ENCODE measurements at regions of chr14 and their contacts with region 1.

Region 1: DNA sequence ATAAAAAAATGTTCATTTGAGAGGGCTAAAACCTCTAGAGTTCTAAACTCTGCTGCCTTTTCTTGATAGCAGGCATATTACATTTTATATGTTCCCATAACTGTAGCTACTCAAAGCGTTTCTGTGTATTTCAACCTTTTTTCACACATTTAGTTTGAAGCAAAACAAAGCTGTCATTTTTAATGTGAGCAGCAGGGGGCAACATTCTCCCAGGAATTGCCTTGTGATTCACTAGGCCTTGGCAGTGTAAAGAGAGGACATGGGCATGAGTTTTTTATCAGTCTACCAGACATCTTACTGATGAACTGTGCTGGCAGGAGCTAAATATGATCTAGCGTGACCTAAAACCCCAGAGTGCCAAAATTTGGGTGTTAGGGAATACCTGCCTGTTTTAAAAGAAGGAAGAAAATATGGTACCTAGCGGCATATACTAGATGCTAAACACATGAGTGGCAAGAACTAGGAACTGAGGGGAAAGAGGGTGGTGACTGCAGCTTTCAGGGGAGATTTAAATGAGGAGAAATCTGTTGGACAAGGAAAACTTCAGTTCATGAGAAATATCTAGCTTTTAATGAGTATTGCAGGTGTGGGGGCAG is 65.3 kb downstream of the IFT43 start:
- DNase-seq: peak; percentile 80
- ATAC-seq: peak; percentile 71
- H3K4me3 ChIP-seq: no peak overlapping the region
- H3K27ac ChIP-seq: no peak overlapping the region
- H3K4me1 ChIP-seq: no peaks in the 10 kb centered on the region
- H3K27me3 ChIP-seq: no peaks in the 10 kb centered on the region
- CTCF ChIP-seq: peak; percentile 92

Region 2: DNA sequence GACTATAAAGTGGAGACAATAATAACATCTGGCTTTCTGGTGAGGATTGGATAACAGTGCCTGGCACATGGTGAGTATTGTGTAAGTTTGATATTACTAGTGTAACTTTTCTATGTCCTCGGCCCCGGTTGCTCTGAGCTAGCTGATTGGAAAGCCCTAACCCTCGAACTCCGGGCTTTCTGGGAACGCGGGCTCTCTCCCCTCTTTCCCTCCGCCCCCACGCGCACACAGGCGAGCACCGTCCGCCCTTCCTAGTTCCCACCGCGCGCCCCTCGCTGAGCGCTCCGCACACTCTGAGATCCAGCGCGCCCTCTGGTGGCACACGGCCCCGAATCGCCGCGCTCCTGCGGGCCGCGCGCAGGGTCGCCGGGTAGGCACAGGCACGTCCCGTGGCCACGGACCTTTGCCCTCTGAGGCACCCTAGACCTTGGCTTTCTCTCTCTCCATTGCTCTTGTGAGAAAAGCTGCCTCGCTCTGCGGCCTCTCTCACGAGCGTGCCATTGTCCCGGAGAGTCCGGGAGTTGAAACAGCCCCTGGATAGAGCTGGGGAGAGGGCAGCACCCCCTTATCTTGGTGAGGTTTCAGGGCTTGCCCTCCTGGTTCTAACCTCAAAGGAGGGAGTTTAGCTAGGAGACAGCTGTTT is 301.9 kb after region 1 on chr14:
- CTCF ChIA-PET with region 1: interaction called, 6 read pairs
- POLR2A ChIA-PET with region 1: no interaction called
- intact Hi-C with region 1: loop called (anchors 5 kb)
- DNase-seq: peak; percentile 30
- ATAC-seq: peak; percentile 51
- H3K4me3 ChIP-seq: no peak overlapping the region
- H3K27ac ChIP-seq: no peak overlapping the region
- H3K4me1 ChIP-seq: peaks cover 6% of the 10 kb centered on the region
- H3K27me3 ChIP-seq: 0 out of 2 replicates have a peak, but pooled peaks cover 6% of the 10 kb centered on the region
- CTCF ChIP-seq: peak; percentile 83

Region 3: DNA sequence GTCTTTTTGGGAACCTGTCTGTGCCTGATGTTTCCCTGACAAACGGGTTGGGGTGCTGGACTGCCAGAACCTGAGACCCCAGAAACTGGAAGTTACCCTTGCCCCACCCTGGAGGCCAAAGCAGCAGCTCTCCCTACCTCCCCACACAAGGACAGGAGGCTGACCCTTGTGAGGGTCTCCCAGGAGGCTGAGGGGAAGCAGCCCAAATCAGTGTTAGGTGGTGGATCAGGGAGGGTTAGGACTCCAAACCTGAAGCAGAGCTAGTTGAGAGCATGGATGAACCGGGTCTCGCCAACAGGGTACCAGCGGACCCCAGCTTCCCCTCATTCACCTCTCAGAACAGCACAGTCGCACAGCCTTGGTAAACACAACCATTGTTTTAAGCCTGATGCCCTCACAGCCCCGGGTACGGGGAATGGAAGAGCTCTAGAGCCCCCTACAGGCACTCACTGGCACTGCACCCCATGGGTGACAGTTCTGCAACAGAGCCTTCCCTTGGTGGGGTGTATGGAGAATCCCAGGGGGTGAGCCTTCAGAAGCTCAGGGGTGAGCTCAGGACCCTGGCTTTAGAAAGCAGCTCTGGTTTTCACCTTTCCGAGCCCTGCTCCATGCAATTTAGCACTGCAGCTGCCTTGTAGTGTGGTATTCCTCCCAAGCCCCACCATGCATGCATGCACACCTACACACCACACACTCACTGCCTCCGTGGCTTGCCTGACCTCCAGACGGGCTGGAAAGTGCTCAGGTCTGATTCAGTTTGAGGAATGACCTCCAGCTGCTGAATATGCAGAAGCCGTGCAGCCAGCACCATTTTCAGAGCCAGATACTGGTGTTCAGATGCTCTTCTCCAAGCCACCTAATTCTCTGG is 336.3 kb after region 1 on chr14:
- CTCF ChIA-PET with region 1: interaction called, 7 read pairs
- POLR2A ChIA-PET with region 1: no interaction called
- intact Hi-C with region 1: loop called (anchors 1 kb)
- DNase-seq: peak; percentile 83
- ATAC-seq: peak; percentile 99
- H3K4me3 ChIP-seq: no peak overlapping the region
- H3K27ac ChIP-seq: no peak overlapping the region
- H3K4me1 ChIP-seq: no peaks in the 10 kb centered on the region
- H3K27me3 ChIP-seq: peaks cover 61% of the 10 kb centered on the region
- CTCF ChIP-seq: peak; percentile 97

Region 4: DNA sequence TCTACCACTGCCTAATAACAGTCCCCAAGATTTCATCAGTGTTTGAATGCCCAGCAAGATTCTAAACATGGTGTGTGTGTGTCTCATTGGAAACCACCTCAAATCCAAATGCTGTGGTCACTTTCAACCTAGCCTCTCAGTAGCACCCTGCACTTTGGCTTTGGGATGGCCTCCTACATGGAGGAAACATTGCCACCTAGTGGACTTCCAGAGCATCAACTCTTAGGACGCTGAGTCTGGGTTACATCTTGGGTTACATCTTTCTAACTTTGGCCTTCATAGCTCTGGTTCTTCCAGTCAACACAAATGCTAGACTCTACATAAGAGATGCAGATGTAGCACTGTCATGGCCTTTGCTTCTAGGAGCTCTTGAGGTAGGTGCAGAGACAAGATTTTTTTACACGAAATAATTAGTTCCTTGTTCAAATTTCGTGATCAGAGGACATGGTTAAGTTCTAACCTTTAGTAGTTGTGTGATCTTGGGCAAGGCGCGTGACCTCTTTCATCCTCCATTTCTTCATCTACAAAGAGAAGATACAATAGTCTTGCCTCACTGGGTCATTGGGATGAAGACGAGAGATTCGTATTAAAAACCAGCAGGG is 596.9 kb after region 1 on chr14:
- CTCF ChIA-PET with region 1: interaction called, 4 read pairs
- POLR2A ChIA-PET with region 1: no interaction called
- intact Hi-C with region 1: loop called (anchors 2 kb)
- DNase-seq: peak; percentile 71
- ATAC-seq: peak; percentile 83
- H3K4me3 ChIP-seq: no peak overlapping the region
- H3K27ac ChIP-seq: no peak overlapping the region
- H3K4me1 ChIP-seq: no peaks in the 10 kb centered on the region
- H3K27me3 ChIP-seq: peaks cover 53% of the 10 kb centered on the region; the same call in 1 of the 2 replicates
- CTCF ChIP-seq: peak; percentile 89

Measured in PC-3 (cell line).